ENCODE measurements at regions of chr20 and their contacts with region 1.

Region 1: GRCh38 chr20:38221119-38221589 is 39.4 kb downstream of the KIAA1755 start:
- DNase-seq: peak; percentile 83 to 89 (median 88)
- ATAC-seq: peak; percentile 93
- H3K4me3 ChIP-seq: no peak overlapping the region
- H3K27ac ChIP-seq: no peak overlapping the region
- H3K4me1 ChIP-seq: peaks cover 0 to 17% of the 10 kb centered on the region in 2 experiments; a peak in 2 of 5 replicates
- H3K27me3 ChIP-seq: peaks cover 7 to 37% of the 10 kb centered on the region in 2 experiments; a peak in 3 of 5 replicates
- CTCF ChIP-seq: peak; percentile 88 to 96 (median 94)
- EP300 ChIP-seq: no peak
- POLR2A ChIP-seq: no peak
- RAD21 ChIP-seq: peak; percentile 85 to 97

Region 2: GRCh38 chr20:37901654-37902503 is 319.3 kb before region 1 on chr20:
- CTCF ChIA-PET with region 1: interaction called, 4 read pairs
- POLR2A ChIA-PET with region 1: no interaction called
- in situ Hi-C with region 1: loop called (anchors 10 kb)
- intact Hi-C with region 1: loop called (anchors 5 kb)
- DNase-seq: peak; percentile 80 to 89 (median 86)
- ATAC-seq: peak; percentile 91
- H3K4me3 ChIP-seq: no peak overlapping the region
- H3K27ac ChIP-seq: no peak overlapping the region
- H3K4me1 ChIP-seq: peaks cover 0 to 16% of the 10 kb centered on the region in 2 experiments; a peak in 2 of 5 replicates
- H3K27me3 ChIP-seq: peaks cover 9 to 43% of the 10 kb centered on the region in 2 experiments; a peak in 4 of 5 replicates
- CTCF ChIP-seq: peak; percentile 67 to 73 (median 71)
- EP300 ChIP-seq: no peak
- POLR2A ChIP-seq: no peak
- RAD21 ChIP-seq: peak; percentile 20 to 75; a peak in 3 of 4 replicates

Region 3: DNA sequence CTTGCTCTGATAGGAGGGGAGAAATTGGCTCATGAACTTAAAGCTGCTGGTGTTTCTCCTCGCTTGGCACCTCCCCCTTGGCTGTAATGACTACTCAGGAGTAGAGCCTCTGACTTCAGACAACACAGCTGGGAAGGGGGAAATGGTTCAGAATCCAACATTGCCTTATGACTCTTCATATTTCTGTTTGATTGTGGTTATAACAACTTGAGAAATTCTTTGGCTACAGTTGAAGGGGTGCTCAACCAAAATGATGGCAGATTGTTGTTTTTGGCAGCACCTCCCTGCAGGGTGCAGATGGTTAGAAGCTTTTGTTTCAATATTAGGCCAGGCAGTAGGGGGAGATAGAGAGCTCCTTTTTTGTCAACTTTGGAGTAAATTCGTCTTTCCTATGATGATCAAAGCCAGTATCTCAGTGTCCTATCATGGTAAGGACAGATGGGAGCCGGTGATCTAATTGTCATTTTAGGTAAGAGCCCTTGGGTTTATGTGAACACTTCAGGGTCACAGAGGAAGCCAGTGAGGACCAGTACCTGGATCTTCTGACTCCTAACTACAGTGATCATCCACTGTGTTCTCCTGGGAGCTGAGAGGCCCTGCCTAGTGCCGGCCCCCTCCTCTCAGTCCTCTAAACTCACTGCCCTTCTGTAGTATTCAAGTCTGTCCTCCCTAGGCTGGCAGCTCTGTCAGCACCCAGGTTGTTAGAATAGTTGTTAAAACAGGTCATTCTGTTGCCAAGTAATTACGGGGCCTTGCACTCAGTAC is 147.7 kb before region 1 on chr20:
- CTCF ChIA-PET with region 1: interaction called, 9 read pairs
- POLR2A ChIA-PET with region 1: interaction called, 9 read pairs
- in situ Hi-C with region 1: no loop called
- intact Hi-C with region 1: loop called (anchors 5 kb)
- DNase-seq: peak; percentile 60 to 76 (median 62)
- ATAC-seq: peak; percentile 93
- H3K4me3 ChIP-seq: no peak overlapping the region
- H3K27ac ChIP-seq: no peak overlapping the region
- H3K4me1 ChIP-seq: peaks cover 0 to 14% of the 10 kb centered on the region in 2 experiments; a peak in 2 of 5 replicates
- H3K27me3 ChIP-seq: no peaks in the 10 kb centered on the region
- CTCF ChIP-seq: peak; percentile 77 to 83 (median 83)
- EP300 ChIP-seq: no peak
- POLR2A ChIP-seq: no peak
- RAD21 ChIP-seq: peak; percentile 69 to 84

Region 4: GRCh38 chr20:38165089-38165989 is 55.8 kb before region 1 on chr20 and contains the start of gene TGM2:
- CTCF ChIA-PET with region 1: interaction called, 4 read pairs
- POLR2A ChIA-PET with region 1: no interaction called
- in situ Hi-C with region 1: no loop called
- intact Hi-C with region 1: loop called (anchors 2 kb)
- DNase-seq: peak; percentile 90 to 96 (median 94)
- ATAC-seq: peak; percentile 96
- H3K4me3 ChIP-seq: peak within 1 kb of the TSS; percentile 54
- H3K27ac ChIP-seq: peak within 1 kb of the TSS; percentile 61
- H3K4me1 ChIP-seq: peaks cover 42 to 48% of the 10 kb centered on the region in 2 experiments; a peak in 4 of 5 replicates
- H3K27me3 ChIP-seq: no peaks in the 10 kb centered on the region
- CTCF ChIP-seq: peak; percentile 88 to 92 (median 91)
- EP300 ChIP-seq: no peak
- POLR2A ChIP-seq: no peak; the same call in 1 of the 2 replicates
- RAD21 ChIP-seq: peak; percentile 97 to 98
- polyA plus RNA-seq, gene TGM2: 5.5 TPM